ENCODE measurements at regions of chr7 and their contacts with region 1.

Region 1: GRCh38 chr7:135335628-135336139 is 102.0 kb downstream of the STRA8 start:
- DNase-seq: peak; percentile 86
- H3K4me3 ChIP-seq: no peak overlapping the region
- H3K27ac ChIP-seq: no peak overlapping the region
- H3K4me1 ChIP-seq: peaks cover 0 to 15% of the 10 kb centered on the region in 2 experiments; a peak in 1 of 4 replicates
- H3K27me3 ChIP-seq: no peaks in the 10 kb centered on the region
- CTCF ChIP-seq: peak; percentile 60
- EP300 ChIP-seq: no peak
- RAD21 ChIP-seq: peak; percentile 99

Region 2: DNA sequence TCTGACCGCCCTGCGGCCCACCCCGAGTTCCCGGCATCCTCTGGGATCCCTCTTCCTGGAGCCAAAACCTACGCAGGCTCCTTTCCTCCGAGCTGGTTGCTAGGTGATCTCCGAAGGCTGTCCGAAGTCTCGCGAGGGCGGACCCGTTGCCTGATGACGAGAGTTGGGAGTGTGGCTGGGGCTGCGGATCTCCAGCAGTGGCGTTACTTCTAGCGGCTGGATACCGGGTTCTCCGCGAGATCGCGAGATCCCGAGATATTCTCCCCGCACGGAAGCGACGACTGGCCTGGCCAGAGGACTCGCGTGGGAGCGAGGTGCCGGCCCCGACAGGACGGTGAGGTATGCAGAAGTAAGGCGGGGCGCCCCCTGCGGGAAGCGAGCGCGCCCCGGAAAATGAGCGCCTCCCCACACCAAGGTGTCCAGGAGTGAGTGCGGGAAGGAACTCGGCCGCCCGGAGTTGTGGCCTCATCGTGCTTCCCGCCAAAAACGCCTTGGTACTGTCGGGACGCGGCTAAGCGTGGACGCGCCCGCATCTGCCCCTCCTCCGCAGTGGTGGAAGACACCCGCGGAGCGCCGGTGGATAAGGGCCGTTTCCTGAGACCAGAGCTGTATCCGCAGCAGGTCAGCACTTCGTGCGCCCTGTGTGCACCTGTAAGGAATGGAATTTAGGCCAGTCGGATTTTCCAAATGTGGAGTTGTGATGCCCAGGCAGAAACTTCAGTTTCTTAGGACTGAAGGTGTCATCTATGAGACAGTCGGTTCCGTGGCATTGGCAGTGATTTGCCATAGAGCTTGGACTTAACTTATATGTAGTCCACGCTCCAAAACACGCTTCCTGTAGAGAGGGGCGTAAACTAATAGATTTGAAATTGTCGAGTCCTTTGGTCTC is 349.1 kb before region 1 on chr7 and contains the start of gene AGBL3:
- CTCF ChIA-PET with region 1: no interaction called
- POLR2A ChIA-PET with region 1: no interaction called
- DNase-seq: peak; percentile 94
- H3K4me3 ChIP-seq: peak within 1 kb of the TSS; percentile 98
- H3K27ac ChIP-seq: peak within 1 kb of the TSS; percentile 71 to 96
- H3K4me1 ChIP-seq: peaks cover 0 to 14% of the 10 kb centered on the region in 2 experiments; a peak in 1 of 4 replicates
- H3K27me3 ChIP-seq: no peaks in the 10 kb centered on the region
- CTCF ChIP-seq: peak; percentile 79
- EP300 ChIP-seq: no peak; a peak in 1 of 4 replicates
- RAD21 ChIP-seq: peak; percentile 36
- polyA plus RNA-seq, gene AGBL3: 0.35 and 0.91 TPM in 2 replicates

Region 3: GRCh38 chr7:135281363-135281949 is 54.2 kb before region 1 on chr7:
- CTCF ChIA-PET with region 1: interaction called, 737 read pairs
- POLR2A ChIA-PET with region 1: interaction called, 3 read pairs
- DNase-seq: peak; percentile 91
- H3K4me3 ChIP-seq: no peak overlapping the region; a peak in 1 of 4 replicates
- H3K27ac ChIP-seq: no peak overlapping the region
- H3K4me1 ChIP-seq: no peaks in the 10 kb centered on the region
- H3K27me3 ChIP-seq: no peaks in the 10 kb centered on the region; the same call in 1 of the 2 replicates
- CTCF ChIP-seq: peak; percentile 100
- EP300 ChIP-seq: no peak; a peak in 1 of 4 replicates
- RAD21 ChIP-seq: peak; percentile 100

Region 4: DNA sequence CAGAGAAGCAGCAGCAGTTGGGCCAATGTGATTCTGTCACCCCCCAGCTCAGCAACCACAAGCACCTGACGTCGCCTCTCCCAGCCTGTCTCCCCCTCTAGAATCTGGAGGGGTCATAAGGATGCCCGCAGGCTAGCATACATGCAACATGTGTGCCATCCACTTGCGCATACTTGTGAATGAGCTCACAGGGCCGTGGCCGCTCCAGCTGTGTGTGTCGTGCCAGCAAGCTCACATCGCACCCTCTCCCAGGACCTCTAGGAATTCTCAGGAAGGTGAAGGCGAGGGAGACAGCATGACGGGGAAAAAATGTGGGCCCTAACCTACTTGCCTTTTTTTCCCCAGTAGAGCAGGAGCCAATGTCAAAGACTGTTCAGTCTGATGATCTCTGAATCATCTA is 21.7 kb before region 1 on chr7:
- CTCF ChIA-PET with region 1: interaction called, 52 read pairs
- POLR2A ChIA-PET with region 1: no interaction called
- DNase-seq: no peak
- H3K4me3 ChIP-seq: no peak overlapping the region
- H3K27ac ChIP-seq: no peak overlapping the region
- H3K4me1 ChIP-seq: peaks cover 0 to 2% of the 10 kb centered on the region in 2 experiments; a peak in 1 of 4 replicates
- H3K27me3 ChIP-seq: no peaks in the 10 kb centered on the region; the same call in 1 of the 2 replicates
- CTCF ChIP-seq: no peak
- EP300 ChIP-seq: no peak
- RAD21 ChIP-seq: no peak

Region 5: DNA sequence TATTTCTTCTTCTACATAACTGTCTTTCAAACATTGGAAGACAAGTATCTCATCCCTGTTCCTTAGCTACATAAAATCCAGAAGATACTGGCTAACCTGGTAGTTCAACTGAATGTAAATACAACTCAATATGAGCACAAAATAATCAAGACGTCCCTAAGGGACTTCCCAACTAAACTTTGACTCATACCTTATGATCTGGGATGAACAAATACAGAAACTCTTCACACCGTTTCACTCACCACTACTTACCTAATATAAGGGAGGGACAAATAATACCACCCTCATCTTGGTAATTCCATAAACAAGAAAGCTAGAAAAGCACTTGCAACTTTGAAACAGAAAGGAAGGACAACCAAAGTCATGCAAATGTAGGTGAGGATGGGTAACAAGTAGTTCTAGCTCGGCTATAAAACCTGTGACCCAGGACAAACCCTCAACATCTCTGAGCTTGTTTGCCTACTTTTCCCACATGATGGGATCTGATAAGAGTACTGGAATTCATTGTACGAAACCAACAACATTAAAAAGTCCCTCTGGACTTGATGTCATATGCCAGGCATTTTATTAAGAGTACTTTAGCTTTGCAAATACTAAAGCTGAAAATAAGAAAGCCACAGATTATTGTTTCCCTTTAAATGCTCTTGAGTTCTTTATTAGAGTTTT is 19.8 kb after region 1 on chr7:
- CTCF ChIA-PET with region 1: interaction called, 41 read pairs
- POLR2A ChIA-PET with region 1: no interaction called
- DNase-seq: no peak
- H3K4me3 ChIP-seq: no peak overlapping the region
- H3K27ac ChIP-seq: no peak overlapping the region
- H3K4me1 ChIP-seq: peaks cover 0 to 5% of the 10 kb centered on the region in 2 experiments; a peak in 1 of 4 replicates
- H3K27me3 ChIP-seq: no peaks in the 10 kb centered on the region
- CTCF ChIP-seq: no peak
- EP300 ChIP-seq: no peak
- RAD21 ChIP-seq: no peak

Region 6: GRCh38 chr7:135389971-135390370 is 54.3 kb after region 1 on chr7:
- CTCF ChIA-PET with region 1: interaction called, 10 read pairs
- POLR2A ChIA-PET with region 1: no interaction called
- DNase-seq: no peak
- H3K4me3 ChIP-seq: no peak overlapping the region
- H3K27ac ChIP-seq: peak overlapping the region in 1 of 2 experiments; percentile 84; a peak in 2 of 4 replicates
- H3K4me1 ChIP-seq: peaks cover 0 to 36% of the 10 kb centered on the region in 2 experiments; a peak in 3 of 4 replicates
- H3K27me3 ChIP-seq: no peaks in the 10 kb centered on the region
- CTCF ChIP-seq: no peak
- EP300 ChIP-seq: no peak
- RAD21 ChIP-seq: no peak

Region 7: GRCh38 chr7:135645296-135645904 is 309.7 kb after region 1 on chr7:
- CTCF ChIA-PET with region 1: interaction called, 34 read pairs
- POLR2A ChIA-PET with region 1: no interaction called
- DNase-seq: peak; percentile 62
- H3K4me3 ChIP-seq: no peak overlapping the region
- H3K27ac ChIP-seq: peak overlapping the region in 1 of 2 experiments; percentile 24; a peak in 2 of 4 replicates
- H3K4me1 ChIP-seq: peaks cover 0 to 6% of the 10 kb centered on the region in 2 experiments; a peak in 2 of 4 replicates
- H3K27me3 ChIP-seq: no peaks in the 10 kb centered on the region
- CTCF ChIP-seq: peak; percentile 92
- EP300 ChIP-seq: no peak
- RAD21 ChIP-seq: peak; percentile 80

Measured in SK-N-SH (cell line).